ENCODE measurements at regions of chr6 and their contacts with region 1.

Region 1: GRCh38 chr6:7505187-7505811 is 36.2 kb upstream of the DSP start:
- DNase-seq: peak; percentile 99
- H3K4me3 Mint-ChIP-seq: peak overlapping the region; percentile 33
- H3K27ac Mint-ChIP-seq: peak overlapping the region; percentile 95
- H3K4me1 Mint-ChIP-seq: peaks cover 26% of the 10 kb centered on the region
- H3K27me3 Mint-ChIP-seq: no peaks in the 10 kb centered on the region
- CTCF ChIP-seq: no peak

Region 2: DNA sequence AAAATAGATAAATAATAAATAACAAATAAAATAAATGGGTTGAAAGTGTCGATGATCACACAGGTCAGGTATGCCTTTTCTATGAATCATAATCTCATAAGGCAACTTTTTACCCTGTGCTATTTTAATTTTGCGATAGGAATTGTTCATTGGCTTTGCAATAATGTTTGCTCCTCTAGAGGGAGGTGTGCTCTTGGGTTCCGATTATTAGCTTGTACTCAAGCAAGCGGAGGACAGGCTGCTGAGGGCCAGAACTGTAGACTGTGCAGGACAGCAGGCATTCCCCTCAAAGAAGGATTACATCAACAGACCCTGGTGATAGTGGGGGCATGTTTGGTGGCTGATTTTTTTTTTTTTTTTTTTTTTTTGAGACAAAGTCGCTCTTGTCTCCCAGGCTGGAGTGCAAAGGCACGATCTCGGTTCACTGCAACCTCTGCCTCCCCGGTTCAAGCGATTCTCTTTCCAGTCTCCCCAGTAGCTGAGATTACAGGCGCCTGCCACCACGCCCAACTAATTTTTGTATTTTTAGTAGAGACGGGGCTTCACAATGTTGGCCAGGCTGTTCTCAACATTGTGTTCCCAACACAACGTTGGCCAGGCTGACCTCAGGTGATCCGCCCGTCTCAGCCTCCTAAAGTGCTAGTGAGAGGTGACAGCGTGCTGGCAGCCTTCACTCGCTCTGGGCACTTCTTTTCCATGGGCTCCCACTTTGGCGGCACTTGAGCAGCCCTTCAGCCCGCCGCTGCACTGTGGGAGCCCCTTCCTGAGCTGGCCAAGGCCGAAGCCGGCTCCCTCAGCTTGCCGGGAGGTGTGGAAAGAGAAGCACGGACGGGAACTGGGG is 80.1 kb before region 1 on chr6:
- CTCF ChIA-PET with region 1: interaction called, 4 read pairs
- POLR2A ChIA-PET with region 1: interaction called, 10 read pairs
- intact Hi-C with region 1: loop called (anchors 1 kb)
- DNase-seq: peak; percentile 80
- H3K4me3 Mint-ChIP-seq: no peak overlapping the region
- H3K27ac Mint-ChIP-seq: no peak overlapping the region
- H3K4me1 Mint-ChIP-seq: no peaks in the 10 kb centered on the region
- H3K27me3 Mint-ChIP-seq: no peaks in the 10 kb centered on the region
- CTCF ChIP-seq: peak; percentile 61

Region 3: DNA sequence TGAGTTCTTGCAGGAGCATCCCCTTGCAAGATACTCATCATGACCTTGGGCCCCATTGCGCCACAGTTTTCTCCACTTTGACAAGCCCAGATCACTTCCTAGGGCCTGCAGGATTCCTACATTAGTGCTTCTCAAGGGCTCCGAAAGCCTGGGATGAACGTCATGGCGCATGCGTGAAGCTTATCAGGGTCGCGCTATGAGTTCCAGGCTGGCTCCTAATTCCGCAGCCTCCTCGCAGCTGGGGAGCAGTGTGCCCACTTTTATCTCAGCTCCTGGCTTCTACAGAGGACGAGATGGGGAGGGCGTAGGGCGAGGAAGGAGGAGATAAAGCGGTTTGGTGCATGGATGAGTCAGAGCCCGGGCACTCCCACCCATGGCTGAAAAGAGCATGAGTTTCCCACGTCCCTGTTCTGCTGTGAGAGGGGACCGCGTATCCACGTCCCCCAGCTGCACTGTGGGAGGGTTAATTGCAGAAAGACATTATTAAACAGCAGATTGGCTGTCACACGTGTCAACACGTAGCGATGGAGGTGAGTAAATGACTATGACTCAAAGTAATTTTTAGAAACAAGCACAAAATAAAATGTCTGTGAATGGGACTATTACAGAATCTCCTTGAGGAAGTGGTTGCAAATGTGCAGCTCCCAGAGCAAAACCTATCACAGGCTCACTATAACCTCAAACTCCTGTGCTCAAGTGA is 36.8 kb before region 1 on chr6:
- CTCF ChIA-PET with region 1: interaction called, 4 read pairs
- POLR2A ChIA-PET with region 1: interaction called, 24 read pairs
- intact Hi-C with region 1: no loop called
- DNase-seq: peak; percentile 77
- H3K4me3 Mint-ChIP-seq: peak overlapping the region; percentile 72
- H3K27ac Mint-ChIP-seq: peak overlapping the region; percentile 83
- H3K4me1 Mint-ChIP-seq: peaks cover 30% of the 10 kb centered on the region
- H3K27me3 Mint-ChIP-seq: no peaks in the 10 kb centered on the region
- CTCF ChIP-seq: no peak

Region 4: DNA sequence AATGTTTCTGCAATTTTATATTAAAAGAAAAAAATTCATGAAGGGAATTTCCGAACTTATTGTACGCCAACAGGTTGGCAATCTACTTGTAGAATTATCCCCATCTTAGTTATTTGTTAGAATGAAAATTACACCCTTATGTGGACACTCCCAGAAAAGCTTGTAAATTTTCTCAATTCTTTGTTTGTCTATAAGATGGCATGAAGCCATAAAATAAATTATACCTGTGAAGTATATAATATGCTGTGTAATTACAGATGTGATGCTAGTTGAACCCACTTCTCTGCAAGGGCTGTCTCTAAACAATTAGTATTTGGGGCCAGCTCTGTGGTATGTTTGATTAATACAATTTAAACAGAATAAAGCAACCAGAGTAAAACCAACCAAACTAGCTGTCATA is 15.9 kb before region 1 on chr6:
- CTCF ChIA-PET with region 1: interaction called, 3 read pairs
- POLR2A ChIA-PET with region 1: interaction called, 16 read pairs
- intact Hi-C with region 1: no loop called
- DNase-seq: no peak
- H3K4me3 Mint-ChIP-seq: no peak overlapping the region
- H3K27ac Mint-ChIP-seq: no peak overlapping the region
- H3K4me1 Mint-ChIP-seq: peaks cover 11% of the 10 kb centered on the region
- H3K27me3 Mint-ChIP-seq: no peaks in the 10 kb centered on the region
- CTCF ChIP-seq: no peak